ENCODE measurements at regions of chrX and their contacts with region 1.

Region 1: GRCh38 chrX:118807151-118808017 is 16.2 kb upstream of the ZCCHC12 start:
- DNase-seq: peak in 1 of 2 donors; percentile 18
- ATAC-seq: peak; percentile 59

Region 2: DNA sequence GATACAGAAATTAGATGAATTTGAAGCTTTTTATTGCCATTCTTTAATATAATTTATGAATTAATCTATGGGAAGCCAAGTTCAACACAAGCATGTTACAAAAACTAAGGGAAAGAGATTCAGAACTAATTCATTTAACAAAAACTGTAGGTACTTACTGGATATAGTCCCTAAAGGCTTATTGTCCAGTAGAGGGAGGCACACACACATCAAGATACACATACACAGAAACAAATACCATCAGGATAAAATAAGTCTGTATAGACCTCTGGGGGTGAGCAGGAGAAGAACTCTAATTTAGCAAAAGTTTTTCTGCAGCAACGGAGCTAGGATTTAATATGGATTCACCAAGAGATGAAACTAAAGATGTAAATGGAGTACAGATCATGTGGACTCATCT is 163.0 kb before region 1 on chrX:
- intact Hi-C with region 1: loop called in 1 of 2 experiments (anchors 5 kb)
- DNase-seq: no peak
- ATAC-seq: peak; percentile 87